ENCODE measurements at regions of chr15 and their contacts with region 1.

Region 1: DNA sequence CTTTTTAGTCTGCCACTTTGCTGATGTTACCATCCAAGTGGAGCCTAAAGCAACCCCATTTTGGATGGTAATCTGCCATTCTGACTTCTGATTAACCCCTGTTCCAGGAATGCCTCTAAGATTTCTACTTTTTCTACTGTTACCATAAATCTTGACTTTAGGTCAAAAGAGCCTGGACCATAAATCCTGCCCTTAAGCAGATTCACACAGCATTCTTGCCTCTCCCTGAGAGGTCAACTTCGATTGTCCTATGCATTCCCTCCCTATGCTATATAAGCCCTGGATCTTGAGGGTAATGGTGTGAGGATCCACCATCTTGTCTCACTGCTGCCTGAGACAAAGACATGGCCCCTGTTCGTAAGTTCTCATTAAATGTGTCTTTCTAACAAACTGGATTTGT is 177.3 kb downstream of the GABRB3 start:
- DNase-seq: no peak
- ATAC-seq: no peak
- H3K4me3 ChIP-seq: no peak overlapping the region
- H3K4me3 Mint-ChIP-seq: no peak overlapping the region
- H3K27ac ChIP-seq: no peak overlapping the region
- H3K27ac Mint-ChIP-seq: no peak overlapping the region
- H3K4me1 ChIP-seq: no peaks in the 10 kb centered on the region
- H3K4me1 Mint-ChIP-seq: no peaks in the 10 kb centered on the region
- H3K27me3 ChIP-seq: no peaks in the 10 kb centered on the region
- H3K27me3 Mint-ChIP-seq: no peaks in the 10 kb centered on the region
- CTCF ChIP-seq: no peak

Region 2: DNA sequence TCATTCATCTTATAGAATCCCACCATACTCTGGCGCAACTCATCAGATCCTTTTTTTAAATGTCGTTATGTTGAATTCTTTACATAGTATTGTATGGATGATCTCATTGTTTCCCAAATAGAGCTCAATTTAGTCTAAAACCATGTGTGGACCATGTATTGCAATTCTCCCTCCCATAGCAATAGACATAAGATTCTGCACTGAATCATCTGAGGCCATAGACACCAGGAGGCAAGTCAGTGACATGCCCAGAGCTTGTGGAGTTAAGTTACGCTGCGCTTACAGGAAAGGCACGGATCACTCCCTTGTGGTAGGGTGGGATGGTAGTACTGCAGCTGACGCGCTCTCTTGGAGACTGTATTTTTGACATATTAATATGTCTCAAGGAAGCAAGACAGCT is 33.7 kb before region 1 on chr15:
- CTCF ChIA-PET with region 1: no interaction called
- POLR2A ChIA-PET with region 1: no interaction called
- intact Hi-C with region 1: no loop called
- DNase-seq: no peak
- ATAC-seq: no peak
- H3K4me3 ChIP-seq: no peak overlapping the region
- H3K4me3 Mint-ChIP-seq: no peak overlapping the region
- H3K27ac ChIP-seq: no peak overlapping the region
- H3K27ac Mint-ChIP-seq: no peak overlapping the region
- H3K4me1 ChIP-seq: no peaks in the 10 kb centered on the region
- H3K4me1 Mint-ChIP-seq: no peaks in the 10 kb centered on the region
- H3K27me3 ChIP-seq: no peaks in the 10 kb centered on the region
- H3K27me3 Mint-ChIP-seq: no peaks in the 10 kb centered on the region
- CTCF ChIP-seq: no peak

Region 3: DNA sequence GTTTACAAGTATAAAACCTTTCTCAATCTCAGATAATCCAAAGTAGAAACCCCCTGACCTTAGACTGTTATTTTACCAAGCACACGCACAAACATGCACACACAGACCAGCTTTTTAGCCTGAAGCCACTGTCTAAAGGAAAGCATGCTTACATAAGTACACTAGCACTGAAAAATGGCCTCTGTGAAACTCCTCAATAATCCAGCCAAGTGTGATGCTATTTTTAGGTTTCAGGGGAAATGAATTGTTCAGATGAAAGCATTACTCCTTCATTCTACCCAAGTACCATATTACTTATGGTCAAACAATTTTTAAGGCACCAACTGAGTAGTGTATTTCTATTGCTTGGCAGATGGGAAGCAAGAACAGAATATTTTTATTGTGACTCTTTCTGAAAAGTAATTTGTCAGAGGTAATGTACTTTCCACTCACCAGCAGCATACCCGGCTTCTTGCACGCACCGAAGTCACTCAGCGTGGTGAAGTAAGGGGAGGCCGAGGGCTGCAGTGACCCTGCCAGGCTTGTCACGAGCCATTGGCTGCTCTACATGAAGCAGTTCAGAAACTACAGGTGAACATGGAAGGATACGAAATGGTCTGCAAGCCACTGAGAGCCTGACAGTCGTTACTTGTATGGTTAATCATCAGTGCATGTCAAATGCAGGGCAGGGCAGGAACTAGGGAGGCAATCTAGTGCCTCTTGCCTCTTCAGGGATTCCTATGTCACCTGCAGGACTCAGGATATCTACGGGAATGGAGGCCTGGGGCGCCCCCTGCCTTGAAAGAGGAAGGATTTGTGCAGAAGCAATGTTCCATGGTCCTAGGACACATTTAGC is 70.6 kb after region 1 on chr15:
- CTCF ChIA-PET with region 1: no interaction called
- POLR2A ChIA-PET with region 1: no interaction called
- intact Hi-C with region 1: loop called in 1 of 2 experiments (anchors 10 kb)
- DNase-seq: no peak
- ATAC-seq: no peak
- H3K4me3 ChIP-seq: no peak overlapping the region
- H3K4me3 Mint-ChIP-seq: no peak overlapping the region
- H3K27ac ChIP-seq: no peak overlapping the region
- H3K27ac Mint-ChIP-seq: no peak overlapping the region
- H3K4me1 ChIP-seq: no peaks in the 10 kb centered on the region
- H3K4me1 Mint-ChIP-seq: no peaks in the 10 kb centered on the region
- H3K27me3 ChIP-seq: no peaks in the 10 kb centered on the region
- H3K27me3 Mint-ChIP-seq: no peaks in the 10 kb centered on the region
- CTCF ChIP-seq: no peak

Region 4: GRCh38 chr15:27358751-27359434 is 763.3 kb after region 1 on chr15:
- CTCF ChIA-PET with region 1: no interaction called
- POLR2A ChIA-PET with region 1: no interaction called
- intact Hi-C with region 1: no loop called
- DNase-seq: no peak
- ATAC-seq: no peak
- H3K4me3 ChIP-seq: no peak overlapping the region
- H3K4me3 Mint-ChIP-seq: no peak overlapping the region
- H3K27ac ChIP-seq: no peak overlapping the region
- H3K27ac Mint-ChIP-seq: no peak overlapping the region
- H3K4me1 ChIP-seq: no peaks in the 10 kb centered on the region
- H3K4me1 Mint-ChIP-seq: no peaks in the 10 kb centered on the region
- H3K27me3 ChIP-seq: no peaks in the 10 kb centered on the region
- H3K27me3 Mint-ChIP-seq: peaks cover 4% of the 10 kb centered on the region
- CTCF ChIP-seq: no peak